Posterior cingulate gyrus (tissue), 11 donors: ENCODE measurements at regions of chr1 and their contacts with region 1.

Region 1: DNA sequence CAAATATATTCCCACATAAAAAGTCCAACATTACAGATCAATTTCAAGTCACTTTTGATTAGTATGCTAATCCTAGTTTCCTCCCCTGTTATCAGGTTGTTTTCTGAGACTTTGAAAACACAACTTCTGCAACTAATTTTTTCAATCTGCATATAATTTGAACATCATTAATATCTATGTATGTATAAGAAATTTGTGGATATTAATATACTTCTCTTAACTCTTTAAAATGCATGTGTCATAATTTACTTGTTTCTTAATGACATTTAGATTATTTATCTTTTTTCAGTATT is 48.6 kb downstream of the EXO1 start:
- DNase-seq: no peak

Region 2: DNA sequence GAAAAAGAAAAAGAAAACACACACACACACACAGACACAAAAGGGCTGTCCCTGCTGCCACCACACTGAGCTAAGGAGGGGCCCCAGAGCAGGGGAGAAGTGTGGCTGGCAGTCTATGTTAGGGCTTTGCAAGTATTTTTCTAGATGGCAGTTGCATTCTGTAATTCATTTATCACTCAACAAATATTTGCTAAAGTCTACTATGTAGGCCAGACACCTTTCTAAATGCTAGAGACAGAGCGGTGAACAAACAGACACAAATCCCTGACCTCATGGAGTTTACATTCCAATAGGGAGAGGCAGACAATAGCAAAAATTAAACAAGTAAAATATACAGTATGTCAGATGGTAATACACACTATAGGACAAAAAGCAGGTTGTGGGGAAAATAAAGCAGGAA is 224.3 kb before region 1 on chr1:
- intact Hi-C with region 1: no loop called
- DNase-seq: no peak

Region 3: GRCh38 chr1:241985787-241986186 is 89.2 kb after region 1 on chr1:
- intact Hi-C with region 1: loop called (anchors 1 kb)
- DNase-seq: peak in 2 of 10 donors; percentile 13 to 19

Region 4: DNA sequence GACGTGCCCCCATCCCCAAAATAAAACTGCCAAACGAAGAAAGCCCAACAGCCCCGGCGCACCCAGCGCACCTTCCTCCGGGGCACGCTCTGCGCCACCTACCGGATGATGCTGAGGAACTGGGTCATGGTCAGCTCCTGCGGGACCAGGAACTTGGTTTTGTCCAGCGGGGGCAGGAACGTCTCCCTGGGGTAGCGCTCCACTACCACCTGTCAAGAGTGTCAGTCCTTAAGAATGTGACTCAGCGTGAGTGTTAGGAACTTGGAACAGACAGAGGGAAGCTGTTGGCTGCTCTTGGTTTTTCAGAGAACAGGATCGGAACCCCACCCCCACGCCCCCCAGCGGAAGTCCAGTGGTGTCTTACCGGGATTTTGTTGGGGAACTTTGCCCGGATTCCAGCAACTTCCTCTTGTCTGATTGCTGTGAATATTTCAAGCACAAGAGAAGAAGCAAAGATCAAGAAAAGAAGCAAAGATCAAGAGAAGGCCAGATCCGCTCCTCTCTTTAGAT is 101.9 kb after region 1 on chr1:
- intact Hi-C with region 1: loop called (anchors 2 kb)
- DNase-seq: peak in 9 of 10 donors; percentile 31 to 86 (median 52)

Region 5: GRCh38 chr1:242017584-242018233 is 121.1 kb after region 1 on chr1:
- intact Hi-C with region 1: loop called (anchors 2 kb)
- DNase-seq: peak; percentile 29 to 94 (median 60)